ENCODE measurements at regions of chr4 and their contacts with region 1.

Region 1: DNA sequence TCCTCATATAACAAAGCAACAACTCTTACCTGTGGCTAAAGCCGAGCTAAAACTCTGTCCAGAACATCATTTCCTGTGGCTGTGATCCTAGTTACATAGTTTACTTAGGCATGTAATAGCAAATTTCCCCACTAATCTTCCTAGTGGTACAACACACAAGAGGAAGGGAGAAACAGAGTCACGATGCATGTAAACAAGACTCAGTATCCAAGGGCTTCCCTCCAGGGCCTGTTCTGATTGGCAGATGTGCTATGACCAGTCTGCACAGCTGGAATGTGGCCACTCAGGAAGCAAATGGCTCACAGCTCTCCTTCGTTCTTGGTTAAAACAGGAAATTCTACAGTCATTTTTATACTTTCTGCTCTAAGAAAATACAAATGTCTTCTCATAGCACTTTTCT is 49.2 kb upstream of the PRSS48 start:
- DNase-seq: peak; percentile 82
- ATAC-seq: peak; percentile 91
- H3K4me3 ChIP-seq: peak overlapping the region; percentile 58 to 90
- H3K27ac ChIP-seq: peak overlapping the region; percentile 61 to 96
- H3K4me1 ChIP-seq: no peaks in the 10 kb centered on the region
- H3K27me3 ChIP-seq: no peaks in the 10 kb centered on the region

Region 2: GRCh38 chr4:151169223-151169622 is 58.5 kb before region 1 on chr4:
- intact Hi-C with region 1: no loop called
- DNase-seq: peak in 1 of 2 donors; percentile 72
- ATAC-seq: peak; percentile 76
- H3K4me3 ChIP-seq: no peak overlapping the region
- H3K27ac ChIP-seq: no peak overlapping the region
- H3K4me1 ChIP-seq: peaks cover 0 to 4% of the 10 kb centered on the region in 2 donors
- H3K27me3 ChIP-seq: no peaks in the 10 kb centered on the region

Region 3: GRCh38 chr4:151325111-151325948 is 97.6 kb after region 1 on chr4 and contains the start of gene SH3D19:
- intact Hi-C with region 1: loop called (anchors 5 kb)
- DNase-seq: peak; percentile 78 to 90
- ATAC-seq: peak; percentile 93
- H3K4me3 ChIP-seq: peak within 1 kb of the TSS; percentile 86 to 88
- H3K27ac ChIP-seq: peak within 1 kb of the TSS; percentile 62 to 85
- H3K4me1 ChIP-seq: no peaks in the 10 kb centered on the region
- H3K27me3 ChIP-seq: no peaks in the 10 kb centered on the region
- total RNA-seq, gene SH3D19: 71.5 to 110 TPM

Measured in aorta (tissue), 5 donors.